HCT116 (cell line): ENCODE measurements at regions of chr1 and their contacts with region 1.

Region 1: DNA sequence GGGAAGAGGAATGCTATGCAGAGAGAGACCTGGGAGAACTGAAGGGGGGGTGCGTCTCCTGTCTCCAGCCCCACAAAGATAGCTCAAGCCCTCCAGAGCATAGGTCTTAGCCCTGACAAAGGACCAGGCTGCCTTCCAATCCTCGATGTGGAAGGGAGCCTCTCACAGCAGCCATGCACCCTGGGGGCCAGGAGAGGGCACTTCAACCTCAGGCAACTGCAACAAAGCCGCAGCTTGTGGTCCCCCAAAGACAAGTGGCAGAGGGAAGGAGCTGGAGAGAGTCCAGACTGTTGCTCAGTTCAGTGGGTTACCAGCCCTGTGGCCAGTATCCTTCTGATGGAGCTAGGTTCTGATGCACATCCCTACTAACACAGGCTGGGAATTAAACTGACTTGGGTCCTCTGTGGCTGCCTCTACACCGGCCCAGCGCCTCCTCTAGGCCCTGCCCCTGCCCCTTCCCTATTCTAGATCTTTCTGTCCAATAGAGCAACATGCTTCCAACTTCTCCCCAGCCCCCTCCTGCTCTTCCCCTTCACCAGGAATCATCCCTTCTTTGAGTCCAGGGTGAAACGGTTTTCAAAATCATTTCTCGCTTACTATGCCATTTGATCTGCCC is 100.8 kb upstream of the SPATA6 start:
- DNase-seq: peak; percentile 35
- ATAC-seq: peak; percentile 96
- H3K4me3 ChIP-seq: no peak overlapping the region
- H3K27ac ChIP-seq: no peak overlapping the region
- H3K4me1 ChIP-seq: no peaks in the 10 kb centered on the region
- H3K27me3 ChIP-seq: peaks cover 40% of the 10 kb centered on the region
- CTCF ChIP-seq: peak; percentile 52 to 74 (median 68)
- POLR2A ChIP-seq: no peak
- RAD21 ChIP-seq: peak; percentile 73

Region 2: GRCh38 chr1:48190881-48191280 is 381.9 kb before region 1 on chr1:
- CTCF ChIA-PET with region 1: no interaction called
- POLR2A ChIA-PET with region 1: no interaction called
- RAD21 ChIA-PET with region 1: no interaction called
- intact Hi-C with region 1: no loop called
- DNase-seq: no peak
- ATAC-seq: no peak
- H3K4me3 ChIP-seq: no peak overlapping the region
- H3K27ac ChIP-seq: no peak overlapping the region
- H3K4me1 ChIP-seq: no peaks in the 10 kb centered on the region
- H3K27me3 ChIP-seq: no peaks in the 10 kb centered on the region
- CTCF ChIP-seq: no peak
- POLR2A ChIP-seq: no peak
- RAD21 ChIP-seq: no peak

Region 3: GRCh38 chr1:48697066-48697707 is 124.4 kb after region 1 on chr1:
- CTCF ChIA-PET with region 1: interaction called, 4 read pairs
- POLR2A ChIA-PET with region 1: no interaction called
- RAD21 ChIA-PET with region 1: no interaction called
- intact Hi-C with region 1: loop called (anchors 1 kb)
- DNase-seq: peak; percentile 18
- ATAC-seq: peak; percentile 83
- H3K4me3 ChIP-seq: no peak overlapping the region
- H3K27ac ChIP-seq: no peak overlapping the region
- H3K4me1 ChIP-seq: peaks cover 0 to 7% of the 10 kb centered on the region in 2 experiments; a peak in 2 of 4 replicates
- H3K27me3 ChIP-seq: peaks cover 42% of the 10 kb centered on the region
- CTCF ChIP-seq: peak; percentile 51 to 93 (median 92)
- POLR2A ChIP-seq: no peak
- RAD21 ChIP-seq: peak; percentile 55

Region 4: GRCh38 chr1:48817505-48818114 is 244.9 kb after region 1 on chr1:
- CTCF ChIA-PET with region 1: interaction called, 21 read pairs
- POLR2A ChIA-PET with region 1: no interaction called
- RAD21 ChIA-PET with region 1: no interaction called
- intact Hi-C with region 1: loop called (anchors 1 kb)
- DNase-seq: peak; percentile 8
- ATAC-seq: peak; percentile 96
- H3K4me3 ChIP-seq: no peak overlapping the region
- H3K27ac ChIP-seq: no peak overlapping the region
- H3K4me1 ChIP-seq: no peaks in the 10 kb centered on the region
- H3K27me3 ChIP-seq: no peaks in the 10 kb centered on the region
- CTCF ChIP-seq: peak; percentile 12 to 80 (median 68); a peak in 4 of 6 replicates
- POLR2A ChIP-seq: no peak
- RAD21 ChIP-seq: peak; percentile 53

Region 5: DNA sequence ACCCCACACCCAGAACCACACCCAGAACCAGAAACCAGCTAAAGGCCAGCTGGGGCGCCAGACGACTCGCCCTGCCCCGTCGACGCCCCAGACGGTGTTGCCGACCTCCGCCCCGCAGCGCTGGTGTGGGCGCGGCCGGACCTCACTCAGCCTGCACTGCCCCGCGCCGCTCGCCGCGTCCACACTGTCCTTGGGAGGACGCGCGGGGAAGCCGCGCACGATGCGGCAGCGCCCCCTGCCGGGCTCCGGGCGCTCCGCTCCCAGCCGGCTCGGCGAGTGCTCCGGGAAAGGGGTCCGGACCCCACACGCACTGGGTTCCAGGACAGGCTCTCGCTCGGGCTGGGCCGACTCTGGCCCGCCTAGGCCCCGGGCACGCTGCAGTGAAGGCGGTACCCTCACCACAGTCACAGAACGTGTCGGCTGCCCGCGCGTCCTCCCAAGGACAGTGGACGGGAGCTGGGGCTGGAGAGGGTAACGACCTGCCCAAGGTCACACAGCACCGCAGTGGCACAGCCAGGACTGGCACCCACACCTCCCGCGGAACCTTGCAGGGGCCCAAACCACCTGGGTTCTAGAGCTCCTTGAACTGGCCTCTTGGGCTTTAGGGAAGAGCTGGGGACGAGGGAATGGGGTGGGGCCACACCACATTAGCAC is 1760.3 kb after region 1 on chr1:
- CTCF ChIA-PET with region 1: interaction called, 3 read pairs
- POLR2A ChIA-PET with region 1: no interaction called
- RAD21 ChIA-PET with region 1: no interaction called
- intact Hi-C with region 1: loop called (anchors 5 kb)
- DNase-seq: no peak
- ATAC-seq: peak; percentile 90
- H3K4me3 ChIP-seq: peak overlapping the region; percentile 54 to 65
- H3K27ac ChIP-seq: peak overlapping the region; percentile 59; the same call in 1 of the 2 replicates
- H3K4me1 ChIP-seq: peaks cover 3 to 13% of the 10 kb centered on the region in 2 experiments; a peak in 2 of 4 replicates
- H3K27me3 ChIP-seq: peaks cover 31% of the 10 kb centered on the region; the same call in 1 of the 2 replicates
- CTCF ChIP-seq: peak; percentile 71 to 95 (median 72)
- POLR2A ChIP-seq: no peak
- RAD21 ChIP-seq: peak; percentile 82

Region 6: GRCh38 chr1:50348449-50349241 is 1775.9 kb after region 1 on chr1:
- CTCF ChIA-PET with region 1: no interaction called
- POLR2A ChIA-PET with region 1: no interaction called
- RAD21 ChIA-PET with region 1: no interaction called
- intact Hi-C with region 1: loop called (anchors 1 kb)
- DNase-seq: peak; percentile 48
- ATAC-seq: peak; percentile 92
- H3K4me3 ChIP-seq: no peak overlapping the region
- H3K27ac ChIP-seq: no peak overlapping the region
- H3K4me1 ChIP-seq: no peaks in the 10 kb centered on the region
- H3K27me3 ChIP-seq: peaks cover 3% of the 10 kb centered on the region; the same call in 1 of the 2 replicates
- CTCF ChIP-seq: peak; percentile 69 to 87 (median 79)
- POLR2A ChIP-seq: no peak
- RAD21 ChIP-seq: peak; percentile 87